Left colon (tissue), 2 donors: ENCODE measurements at regions of chr12 and their contacts with region 1.

Region 1: GRCh38 chr12:27733052-27733656 is 22.5 kb downstream of the MRPS35 start:
- DNase-seq: peak in 1 of 2 donors; percentile 21
- ATAC-seq: peak; percentile 82

Region 2: DNA sequence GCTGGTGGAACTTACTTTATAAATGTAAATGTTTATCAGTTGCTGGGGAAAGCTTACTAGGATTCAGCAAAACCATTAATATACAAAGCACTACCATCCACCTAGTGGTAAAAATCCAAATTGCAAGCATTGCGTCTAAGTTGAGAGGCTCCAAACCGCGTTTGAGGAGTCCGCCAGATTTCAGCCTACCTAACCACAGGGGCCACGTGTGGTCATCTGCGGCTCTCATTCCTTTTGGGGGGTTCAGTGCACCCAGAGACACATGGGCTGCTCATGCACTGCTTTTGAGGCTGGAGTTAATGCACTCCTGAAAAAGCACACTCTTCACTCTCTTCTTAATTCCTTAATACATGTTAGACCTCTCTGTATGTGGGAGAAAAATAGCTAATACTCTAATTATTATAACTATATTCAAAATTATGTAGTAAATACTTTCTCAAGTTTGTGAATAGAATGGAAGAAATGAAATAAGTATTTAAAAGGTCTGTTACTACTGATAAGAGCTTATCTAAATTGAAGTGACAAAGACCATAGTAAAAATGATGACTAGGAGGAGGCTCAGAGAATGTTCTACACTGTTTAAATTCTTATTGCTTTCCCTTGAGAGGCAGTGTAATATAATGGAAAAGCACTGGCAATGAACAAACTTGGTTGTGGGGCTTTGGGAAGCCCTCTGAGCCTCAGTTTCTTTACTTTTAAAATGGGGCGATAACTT is 88.3 kb after region 1 on chr12:
- intact Hi-C with region 1: loop called in 1 of 2 experiments (anchors 5 kb)
- DNase-seq: peak in 1 of 2 donors; percentile 15
- ATAC-seq: peak; percentile 78

Region 3: DNA sequence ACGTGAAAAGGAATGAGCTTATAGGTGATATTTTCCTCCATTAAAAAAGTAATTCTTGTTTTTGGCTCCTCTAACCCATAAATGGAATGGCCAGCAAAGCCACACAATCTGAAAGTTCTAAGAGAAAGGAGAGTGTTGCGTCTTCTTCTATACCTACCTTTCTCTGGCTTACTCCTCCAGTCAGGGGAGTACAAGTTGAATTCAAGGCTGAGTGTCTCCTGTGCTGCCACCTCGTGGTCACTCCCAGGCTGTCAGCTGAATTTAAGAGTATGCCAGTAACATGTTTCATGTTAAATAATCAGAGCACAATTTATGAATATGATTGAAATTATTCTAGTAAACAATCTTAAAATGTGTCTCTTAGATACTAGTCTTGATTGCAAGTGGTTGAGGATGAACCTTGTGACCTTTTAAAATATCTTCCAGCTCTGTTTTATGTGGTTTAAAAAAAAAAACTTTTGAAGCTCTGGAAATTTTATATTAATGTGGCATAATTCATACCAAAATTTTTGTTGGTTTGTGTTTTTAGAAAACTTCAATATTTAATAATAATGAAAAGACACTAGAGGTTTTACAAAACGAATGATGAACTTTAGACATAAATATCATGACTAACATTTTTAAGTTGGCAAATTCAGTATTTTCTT is 207.7 kb after region 1 on chr12:
- intact Hi-C with region 1: loop called in 1 of 2 experiments (anchors 5 kb)
- DNase-seq: peak; percentile 34 to 79
- ATAC-seq: peak; percentile 72